Activated naive CD4-positive, alpha-beta T cell treated with anti-CD3 and anti-CD28 coated beads, Interleukin-2, amount 10 ng/mL, durations not matched to agents 7 days and 5 days (primary cell): ENCODE measurements at regions of chr17 and their contacts with region 1.

Region 1: DNA sequence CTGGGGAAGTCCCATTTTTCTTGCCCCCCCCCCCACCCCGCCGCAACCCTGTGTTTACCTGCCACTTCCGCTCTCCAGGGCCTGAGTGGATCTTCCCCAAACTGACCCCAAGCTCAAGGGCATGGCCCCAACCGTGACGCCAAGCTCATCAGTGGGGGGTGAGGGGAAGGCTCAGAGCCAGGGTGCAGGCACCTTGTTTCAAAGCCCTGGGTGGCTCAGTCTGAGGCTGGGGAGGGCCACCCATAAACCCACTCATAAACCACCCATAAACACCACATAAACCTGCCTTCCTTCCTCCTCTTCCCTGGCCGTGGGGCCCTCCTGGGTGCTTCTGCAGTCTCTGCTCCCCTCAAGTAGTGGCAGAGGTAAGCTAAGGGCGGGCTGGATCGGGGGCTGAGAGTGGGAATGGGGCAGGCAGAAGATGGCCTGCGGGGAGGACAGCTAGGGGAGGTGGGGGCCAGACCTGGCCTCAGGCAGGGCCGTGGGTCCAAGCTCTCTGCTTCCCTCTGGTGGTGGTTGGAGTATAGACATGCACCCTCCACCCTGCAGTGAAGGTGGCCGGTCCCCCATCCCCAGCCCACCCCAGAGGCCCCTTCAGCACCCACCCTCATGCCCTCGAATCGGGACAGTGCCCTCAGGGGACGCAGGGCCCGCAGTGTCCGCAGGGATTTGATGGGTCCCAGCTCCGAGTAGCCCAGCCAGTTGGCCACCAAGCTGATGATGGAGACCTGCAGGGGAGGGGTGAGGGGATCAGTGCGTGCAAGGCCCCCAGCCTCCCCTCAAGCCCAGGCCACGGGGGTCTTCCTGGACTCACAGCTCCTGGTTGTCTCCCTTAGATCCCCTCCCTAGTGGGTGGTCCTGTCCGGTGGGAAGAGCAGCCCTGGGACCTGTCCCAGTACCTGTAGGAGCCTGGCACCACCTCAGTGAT is 14.6 kb upstream of the CD79B start:
- DNase-seq: peak; percentile 72
- H3K4me3 Mint-ChIP-seq: peak overlapping the region; percentile 54
- H3K27ac Mint-ChIP-seq: peak overlapping the region; percentile 85
- H3K4me1 Mint-ChIP-seq: peaks cover 23% of the 10 kb centered on the region
- H3K27me3 Mint-ChIP-seq: peaks cover 81% of the 10 kb centered on the region

Region 2: DNA sequence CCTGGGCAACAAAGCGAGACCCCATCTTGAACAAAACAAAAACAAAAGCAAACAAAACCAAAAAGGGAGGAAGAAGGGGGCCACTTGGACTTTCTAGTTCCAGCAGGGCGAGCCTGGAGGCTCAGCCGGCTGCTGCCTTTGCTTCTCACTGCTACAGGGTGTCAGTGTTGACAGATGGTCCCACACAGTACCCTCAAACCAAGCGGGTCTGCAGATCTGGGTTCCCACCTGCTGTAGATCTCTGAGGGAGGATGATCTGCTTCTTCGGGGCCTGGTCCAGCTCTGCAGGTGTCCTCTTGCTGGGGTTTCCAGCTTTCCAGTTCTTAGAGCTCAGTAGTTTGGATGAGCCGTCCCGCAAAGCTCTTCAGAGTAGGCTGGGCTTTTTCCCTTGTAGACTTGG is 42.4 kb before region 1 on chr17:
- CTCF ChIA-PET with region 1: interaction called, 16 read pairs
- DNase-seq: no peak
- H3K4me3 Mint-ChIP-seq: no peak overlapping the region
- H3K27ac Mint-ChIP-seq: no peak overlapping the region
- H3K4me1 Mint-ChIP-seq: peaks cover 2% of the 10 kb centered on the region
- H3K27me3 Mint-ChIP-seq: peaks cover 58% of the 10 kb centered on the region

Region 3: GRCh38 chr17:63911657-63912426 is 34.9 kb before region 1 on chr17:
- CTCF ChIA-PET with region 1: interaction called, 16 read pairs
- DNase-seq: peak; percentile 77
- H3K4me3 Mint-ChIP-seq: no peak overlapping the region
- H3K27ac Mint-ChIP-seq: no peak overlapping the region
- H3K4me1 Mint-ChIP-seq: peaks cover 2% of the 10 kb centered on the region
- H3K27me3 Mint-ChIP-seq: peaks cover 63% of the 10 kb centered on the region

Region 4: DNA sequence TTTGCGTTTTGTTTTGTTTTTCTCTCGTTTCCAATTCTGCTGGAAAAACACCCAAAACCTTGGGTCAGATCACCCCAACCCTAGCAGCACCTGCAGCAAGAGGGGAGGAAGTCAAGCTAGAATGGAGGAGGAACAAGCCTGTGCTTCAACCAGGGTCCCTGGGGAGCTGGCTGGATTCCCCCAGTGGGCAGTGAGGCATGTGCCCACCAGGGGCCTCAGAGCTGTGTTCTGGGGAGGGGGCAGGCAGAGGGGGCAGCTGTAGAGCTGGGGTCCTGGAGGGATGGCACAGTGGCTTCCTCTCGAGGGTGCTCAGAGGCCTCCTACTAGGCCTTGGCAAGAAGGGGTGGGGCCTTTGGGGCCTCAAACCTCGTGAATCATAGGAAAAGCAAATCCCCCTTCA is 21.1 kb before region 1 on chr17:
- CTCF ChIA-PET with region 1: interaction called, 62 read pairs
- DNase-seq: no peak
- H3K4me3 Mint-ChIP-seq: no peak overlapping the region
- H3K27ac Mint-ChIP-seq: no peak overlapping the region
- H3K4me1 Mint-ChIP-seq: peaks cover 6% of the 10 kb centered on the region
- H3K27me3 Mint-ChIP-seq: peaks cover 26% of the 10 kb centered on the region

Region 5: DNA sequence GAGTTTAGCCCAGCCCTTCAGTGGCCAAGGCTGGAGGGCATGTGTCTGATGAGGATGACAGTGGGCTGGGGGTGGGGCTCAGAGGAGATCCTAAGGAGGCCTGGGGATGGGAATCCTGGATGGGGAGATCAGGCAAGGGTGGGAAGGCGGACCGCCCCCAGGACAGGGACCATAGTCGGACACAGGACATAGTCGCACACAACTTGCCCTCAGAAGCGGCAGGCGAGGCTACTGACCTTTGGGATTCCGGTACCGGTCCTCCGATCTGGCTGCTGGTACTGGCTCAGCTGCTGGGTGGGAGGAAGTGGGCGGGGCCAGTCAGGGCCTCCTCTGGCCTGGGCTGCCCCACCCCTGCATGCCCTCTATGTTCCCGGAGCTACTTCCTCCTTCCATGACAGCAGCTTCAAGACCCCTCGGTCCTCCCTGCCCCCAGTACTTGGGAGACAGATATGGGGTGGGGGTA is 15.6 kb before region 1 on chr17:
- CTCF ChIA-PET with region 1: interaction called, 39 read pairs
- DNase-seq: peak; percentile 82
- H3K4me3 Mint-ChIP-seq: peak overlapping the region; percentile 93
- H3K27ac Mint-ChIP-seq: peak overlapping the region; percentile 84
- H3K4me1 Mint-ChIP-seq: peaks cover 32% of the 10 kb centered on the region
- H3K27me3 Mint-ChIP-seq: peaks cover 36% of the 10 kb centered on the region

Region 6: DNA sequence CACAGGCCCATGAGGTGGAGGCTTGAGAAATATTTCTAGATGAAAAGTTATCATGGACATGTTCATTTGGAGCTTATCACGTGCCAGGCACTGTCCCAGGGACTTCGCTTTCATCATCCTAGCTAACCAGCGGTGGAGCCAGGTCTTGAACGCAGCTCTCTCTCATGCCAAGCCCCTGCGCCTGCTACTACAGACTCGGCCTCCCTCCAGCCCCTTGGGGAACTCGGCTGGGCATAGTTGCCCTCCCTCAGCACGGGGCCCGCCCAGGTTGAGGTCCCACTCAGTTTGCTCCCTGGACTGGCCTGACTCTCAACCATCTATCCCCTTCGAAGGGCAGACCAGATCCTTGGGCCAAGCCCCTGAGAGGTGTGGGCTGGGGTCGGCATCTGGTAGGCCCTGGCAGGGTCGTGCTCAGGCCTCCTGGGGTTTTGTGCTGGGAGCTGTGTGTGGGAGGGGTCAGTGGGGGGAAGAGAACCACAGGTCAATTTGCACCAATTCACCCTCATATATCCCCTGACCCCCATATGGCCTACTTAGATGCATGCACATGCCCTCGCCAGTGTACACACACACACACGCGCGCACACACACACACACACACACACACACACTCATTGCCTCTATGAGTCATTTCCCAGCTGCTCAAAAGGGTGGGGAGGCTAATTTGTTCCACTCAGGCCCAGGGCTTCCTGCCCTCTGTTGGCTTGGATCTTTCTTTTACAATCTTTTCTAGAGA is 38.1 kb after region 1 on chr17:
- CTCF ChIA-PET with region 1: interaction called, 19 read pairs
- DNase-seq: peak; percentile 76
- H3K4me3 Mint-ChIP-seq: peak overlapping the region; percentile 9
- H3K27ac Mint-ChIP-seq: peak overlapping the region; percentile 78
- H3K4me1 Mint-ChIP-seq: peaks cover 29% of the 10 kb centered on the region
- H3K27me3 Mint-ChIP-seq: peaks cover 12% of the 10 kb centered on the region

Region 7: DNA sequence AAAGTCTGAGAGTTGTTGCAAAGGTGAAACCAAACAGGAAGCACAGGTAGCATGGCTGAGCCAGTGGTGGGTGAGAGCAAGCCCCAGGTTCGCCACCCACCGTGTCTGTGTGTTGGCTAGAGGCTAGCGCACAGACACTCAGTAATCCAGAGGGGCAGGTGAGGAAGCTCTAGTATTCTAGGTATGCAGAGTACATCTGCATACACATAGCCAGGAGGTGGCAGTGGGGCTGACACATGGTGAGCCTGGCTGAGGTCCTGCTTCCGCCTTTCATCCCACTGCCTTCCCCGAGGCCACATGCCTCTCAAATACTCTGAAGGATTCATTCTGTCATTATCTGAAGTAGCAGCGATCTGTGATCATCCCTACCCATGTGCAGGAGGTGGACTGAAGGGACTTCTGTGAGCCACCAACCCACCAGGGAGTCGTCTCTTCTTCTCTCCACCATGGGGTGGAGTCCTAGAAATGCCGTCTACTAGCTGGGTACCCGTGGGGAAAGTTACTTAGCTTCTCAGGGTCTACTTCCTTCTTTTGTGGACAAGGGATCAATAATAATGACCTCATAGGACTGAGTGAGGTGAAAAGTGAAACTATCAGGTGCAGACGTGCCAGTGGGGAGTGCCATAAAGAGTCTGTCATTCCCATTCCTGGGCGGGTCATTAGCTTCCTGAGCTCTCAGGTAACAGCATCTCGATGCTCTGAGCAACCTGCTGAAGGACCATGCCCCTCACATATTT is 109.7 kb after region 1 on chr17:
- CTCF ChIA-PET with region 1: no interaction called
- DNase-seq: no peak
- H3K4me3 Mint-ChIP-seq: peak overlapping the region; percentile 42
- H3K27ac Mint-ChIP-seq: peak overlapping the region; percentile 82
- H3K4me1 Mint-ChIP-seq: peaks cover 64% of the 10 kb centered on the region
- H3K27me3 Mint-ChIP-seq: no peaks in the 10 kb centered on the region